Activated naive CD8-positive, alpha-beta T cell treated with anti-CD3 and anti-CD28 coated beads, Interleukin-2, amount 10 ng/mL, durations not matched to agents 7 days and 5 days (primary cell): ENCODE measurements at regions of chrX and their contacts with region 1.

Region 1: DNA sequence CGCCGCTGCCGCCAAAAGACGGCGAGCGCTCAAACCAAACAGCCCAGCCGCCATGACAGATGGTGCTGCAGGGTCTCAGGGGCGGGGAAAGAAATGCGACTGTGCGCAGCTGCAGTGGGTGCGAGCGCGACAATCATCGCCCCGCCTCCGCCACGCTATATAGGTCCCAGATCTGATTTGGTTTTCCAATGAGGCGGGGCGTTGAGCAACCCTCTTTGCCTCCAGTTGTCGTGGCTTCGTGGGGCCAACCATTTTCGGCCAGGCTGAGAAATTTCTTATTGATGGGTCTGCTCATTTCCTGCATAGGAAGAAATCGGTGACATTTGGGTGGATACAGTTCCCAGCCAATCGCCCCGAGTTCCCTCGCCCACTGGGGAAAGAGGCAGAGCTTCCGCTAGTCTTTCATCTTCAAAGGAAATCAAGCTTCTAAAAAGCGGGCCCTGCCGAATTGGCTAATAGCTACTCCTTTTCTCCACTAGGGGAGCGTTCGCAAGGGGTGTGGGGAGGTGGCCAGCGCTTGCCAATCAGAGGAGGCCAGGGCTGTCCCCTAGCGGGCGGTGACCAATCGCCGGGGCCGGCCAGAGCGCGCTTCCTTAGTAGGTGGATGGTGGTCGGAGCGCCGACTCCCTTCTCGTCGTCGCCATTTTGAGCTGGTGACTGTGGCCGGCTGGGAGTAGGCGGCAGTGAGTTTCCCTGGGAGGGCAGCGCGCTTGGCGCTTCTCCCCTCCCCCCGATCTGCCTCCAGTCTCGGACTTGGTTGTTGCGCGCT is at the starts of genes NDUFB11 and RBM10:
- DNase-seq: peak; percentile 85
- ATAC-seq: peak; percentile 95
- H3K4me3 Mint-ChIP-seq: peak within 1 kb of the TSS; percentile 95
- H3K27ac Mint-ChIP-seq: peak within 1 kb of the TSS; percentile 99
- H3K4me1 Mint-ChIP-seq: peaks cover 16% of the 10 kb centered on the region
- H3K27me3 Mint-ChIP-seq: no peaks in the 10 kb centered on the region
- total RNA-seq, gene NDUFB11: 71.7 to 78.7 TPM
- total RNA-seq, gene RBM10: 59.9 to 61.2 TPM

Region 2: GRCh38 chrX:47129157-47129898 is 15.5 kb before region 1 on chrX:
- POLR2A ChIA-PET with region 1: interaction called, 29 read pairs
- DNase-seq: peak; percentile 82
- ATAC-seq: peak; percentile 99
- H3K4me3 Mint-ChIP-seq: peak overlapping the region; percentile 97
- H3K27ac Mint-ChIP-seq: peak overlapping the region; percentile 98
- H3K4me1 Mint-ChIP-seq: peaks cover 3% of the 10 kb centered on the region
- H3K27me3 Mint-ChIP-seq: no peaks in the 10 kb centered on the region

Region 3: DNA sequence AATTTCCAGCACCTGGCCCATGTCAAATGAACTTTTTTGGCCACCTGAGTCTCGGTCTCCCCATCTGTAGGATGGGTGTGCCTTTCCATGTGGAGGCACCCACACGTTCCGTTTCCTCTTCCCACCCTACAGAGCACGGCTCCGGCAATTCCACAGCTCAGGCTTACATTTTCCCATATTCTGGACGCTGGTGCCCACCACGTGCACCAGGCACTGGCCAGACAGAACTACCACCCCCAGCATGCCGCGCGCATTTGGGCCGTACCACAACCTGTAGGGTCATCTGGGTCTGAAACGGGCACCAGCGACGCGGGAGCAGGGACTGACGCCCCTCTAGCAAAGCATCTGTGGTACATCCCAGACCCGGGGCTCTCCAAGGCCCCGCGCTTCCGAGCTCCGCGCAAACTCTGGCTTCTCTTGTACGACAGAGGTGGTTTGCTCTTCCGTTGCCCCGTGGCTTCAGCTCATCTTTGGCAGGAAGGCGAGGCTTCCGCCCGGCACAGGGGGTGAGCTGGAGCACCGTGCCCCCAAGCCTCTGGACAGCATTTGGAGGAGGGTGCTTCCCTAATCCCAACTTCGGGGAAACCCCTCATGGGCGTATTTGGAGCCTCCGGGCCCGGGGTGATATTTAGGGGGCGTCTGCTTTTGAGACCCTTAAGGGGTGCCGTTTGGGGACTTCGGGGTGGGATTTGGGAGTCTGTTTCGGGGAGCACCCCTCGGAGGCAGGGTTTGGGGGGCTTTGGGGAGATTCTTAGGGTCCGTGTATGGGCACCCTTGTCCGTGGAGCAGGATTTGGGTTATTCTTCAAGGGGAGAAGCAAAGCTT is 45.8 kb after region 1 on chrX:
- POLR2A ChIA-PET with region 1: interaction called, 31 read pairs
- DNase-seq: peak; percentile 75
- ATAC-seq: peak; percentile 78
- H3K4me3 Mint-ChIP-seq: peak overlapping the region; percentile 90
- H3K27ac Mint-ChIP-seq: peak overlapping the region; percentile 95
- H3K4me1 Mint-ChIP-seq: peaks cover 20% of the 10 kb centered on the region
- H3K27me3 Mint-ChIP-seq: no peaks in the 10 kb centered on the region

Region 4: DNA sequence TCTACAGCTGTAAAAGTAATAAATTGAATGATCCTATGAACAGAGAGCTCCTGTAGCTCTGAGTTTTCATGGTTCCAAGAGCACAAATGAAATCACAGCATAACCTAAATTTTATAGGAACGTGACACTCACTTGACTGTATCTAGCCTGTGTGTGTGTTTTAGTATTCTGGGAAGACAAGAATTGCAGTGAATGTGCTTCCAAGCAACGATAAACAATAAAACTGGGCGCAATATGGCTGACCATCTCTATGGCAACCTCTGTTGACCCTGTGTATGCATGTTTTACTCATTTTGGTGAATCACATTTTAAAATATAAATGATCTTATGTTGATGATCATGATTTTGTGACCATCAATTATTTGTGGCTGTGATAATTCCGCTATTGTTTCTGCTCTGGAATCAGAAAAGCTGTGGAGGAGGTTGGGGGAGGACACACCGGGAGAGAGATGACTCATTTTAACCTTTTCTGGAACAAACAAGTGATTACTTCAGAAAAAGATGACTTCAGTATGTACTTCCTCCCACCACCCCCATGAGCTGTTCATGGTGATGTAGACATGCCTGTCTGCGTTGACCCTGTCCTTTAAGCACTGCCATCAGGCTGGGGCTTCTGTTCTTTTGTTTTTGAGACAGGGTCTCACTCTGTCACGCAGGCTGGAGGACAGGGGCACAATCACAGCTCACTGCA is 119.8 kb after region 1 on chrX:
- POLR2A ChIA-PET with region 1: no interaction called
- DNase-seq: no peak
- ATAC-seq: no peak
- H3K4me3 Mint-ChIP-seq: no peak overlapping the region
- H3K27ac Mint-ChIP-seq: no peak overlapping the region
- H3K4me1 Mint-ChIP-seq: peaks cover 2% of the 10 kb centered on the region
- H3K27me3 Mint-ChIP-seq: no peaks in the 10 kb centered on the region